ENCODE measurements at regions of chr2 and their contacts with region 1.

Region 1: DNA sequence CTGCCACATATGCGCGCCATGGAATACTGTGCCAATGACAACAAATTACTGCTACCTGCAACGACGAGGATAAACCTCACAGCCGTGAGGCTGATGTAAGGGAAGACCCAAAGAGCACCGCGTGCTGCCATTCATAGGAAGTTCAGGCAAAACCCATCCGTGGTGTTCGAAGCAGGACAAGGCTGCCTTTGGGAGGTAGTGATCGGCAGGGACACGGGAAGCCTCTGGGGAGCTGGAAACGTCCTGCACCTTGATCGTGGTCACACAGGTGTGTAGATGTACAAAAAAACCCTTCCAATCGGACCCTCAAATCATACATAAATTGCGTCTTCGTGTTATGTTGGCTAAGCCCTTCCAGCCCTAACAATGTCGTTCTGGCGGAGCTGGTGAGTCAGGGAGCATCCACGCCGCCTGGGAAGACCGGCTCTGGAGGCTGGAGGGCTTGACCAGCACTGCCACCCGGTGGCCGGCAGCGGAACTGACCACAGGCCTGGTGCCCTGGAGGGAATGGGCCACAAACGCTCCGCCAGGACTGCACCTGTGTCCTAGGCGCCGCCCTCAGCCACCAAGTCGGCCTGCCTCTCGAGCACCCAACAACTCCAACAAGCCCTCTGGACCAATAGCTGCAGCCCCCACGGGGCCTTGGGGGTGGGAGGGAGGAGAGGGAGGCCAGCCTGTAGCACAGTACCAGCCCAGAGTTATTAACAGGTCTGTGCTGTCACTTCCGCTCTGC is 4.1 kb upstream of the NEURL3 start:
- DNase-seq: peak; percentile 85
- H3K4me3 ChIP-seq: no peak overlapping the region
- H3K27ac ChIP-seq: no peak overlapping the region
- H3K4me1 ChIP-seq: peaks cover 4% of the 10 kb centered on the region
- H3K27me3 ChIP-seq: no peaks in the 10 kb centered on the region
- CTCF ChIP-seq: peak; percentile 93

Region 2: DNA sequence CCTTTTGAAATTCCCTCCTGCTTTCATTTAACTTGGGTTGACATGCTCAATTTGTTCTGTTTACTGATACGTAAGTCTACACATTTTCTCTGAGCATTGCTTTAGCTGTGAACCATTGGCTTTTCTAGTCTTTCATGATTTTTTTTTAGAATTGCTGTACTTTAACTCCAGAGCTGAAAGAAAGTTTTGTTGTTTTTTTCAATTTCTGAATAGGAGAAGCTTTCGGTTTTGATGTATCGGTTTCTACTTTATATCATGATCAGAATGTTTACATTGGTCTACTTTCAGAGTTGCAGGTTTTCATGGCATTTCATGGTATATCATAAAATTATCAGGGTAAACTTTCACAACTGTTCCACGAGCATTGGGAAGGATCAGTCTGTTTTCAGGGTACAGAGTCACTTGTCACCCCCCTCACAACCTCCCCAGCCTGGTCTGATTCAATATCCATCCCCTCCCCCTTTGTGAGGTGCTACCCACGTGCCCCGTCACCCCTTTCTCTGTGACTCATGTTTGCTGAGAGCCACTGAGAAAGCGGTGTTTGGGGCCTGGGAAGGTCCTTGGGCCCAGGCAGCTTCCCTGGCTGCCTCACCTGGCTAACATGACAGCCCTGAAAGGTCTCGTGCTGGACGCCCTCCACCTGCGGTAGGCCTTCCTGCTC is 378.0 kb before region 1 on chr2:
- CTCF ChIA-PET with region 1: no interaction called
- POLR2A ChIA-PET with region 1: no interaction called
- intact Hi-C with region 1: loop called (anchors 5 kb)
- DNase-seq: no peak
- H3K4me3 ChIP-seq: no peak overlapping the region
- H3K27ac ChIP-seq: no peak overlapping the region
- H3K4me1 ChIP-seq: no peaks in the 10 kb centered on the region
- H3K27me3 ChIP-seq: peaks cover 3% of the 10 kb centered on the region
- CTCF ChIP-seq: no peak

Region 3: DNA sequence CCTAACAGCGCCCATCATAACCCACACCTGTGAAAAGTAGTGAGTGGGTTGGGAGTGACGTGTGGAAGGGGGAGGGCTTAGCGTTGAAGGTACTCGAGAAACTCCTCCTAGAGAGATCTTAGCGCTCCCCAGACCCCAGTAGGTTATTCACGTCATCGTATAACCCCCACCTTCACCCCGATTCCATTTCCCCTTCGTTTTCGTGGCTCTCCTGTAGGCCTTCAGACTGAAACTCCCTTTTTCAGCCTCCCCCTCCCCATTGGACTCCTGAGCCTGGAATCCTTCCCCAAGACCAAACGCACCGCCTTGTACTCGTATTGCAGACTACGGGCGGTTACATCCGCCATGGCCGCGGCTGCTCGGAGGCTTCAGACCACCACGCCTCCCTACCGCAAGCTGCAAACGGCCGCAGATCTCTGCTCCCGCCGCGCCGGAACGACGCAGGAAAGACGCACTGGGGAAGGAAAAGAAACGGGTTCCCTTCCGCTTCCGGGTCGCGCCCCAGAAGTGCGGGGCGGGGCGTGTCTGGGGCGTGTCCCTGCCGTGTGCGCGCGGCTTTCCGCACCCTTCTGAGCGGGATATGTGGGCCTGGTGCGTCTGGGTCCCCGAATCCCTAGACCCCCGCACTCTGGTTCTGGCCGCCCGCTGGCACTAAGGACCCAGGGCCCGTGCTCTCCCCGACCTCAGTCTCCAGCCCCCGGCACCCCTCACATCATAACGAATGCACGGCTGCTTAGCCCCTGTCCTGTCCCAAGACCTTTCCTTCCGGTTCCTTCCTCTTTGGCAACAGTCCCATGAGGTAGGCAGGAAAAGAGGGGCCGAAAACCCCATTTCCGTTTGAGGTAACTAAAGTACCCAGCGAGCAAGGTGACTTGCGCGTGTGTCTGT is 203.9 kb before region 1 on chr2 and contains the start of gene SNRNP200:
- CTCF ChIA-PET with region 1: no interaction called
- POLR2A ChIA-PET with region 1: no interaction called
- intact Hi-C with region 1: loop called (anchors 2 kb)
- DNase-seq: peak; percentile 96
- H3K4me3 ChIP-seq: peak within 1 kb of the TSS; percentile 94
- H3K27ac ChIP-seq: peak within 1 kb of the TSS; percentile 90
- H3K4me1 ChIP-seq: peaks cover 15% of the 10 kb centered on the region
- H3K27me3 ChIP-seq: no peaks in the 10 kb centered on the region
- CTCF ChIP-seq: no peak
- total RNA-seq, gene SNRNP200: 202 and 208 TPM in 2 replicates

Region 4: GRCh38 chr2:96407041-96407918 is 102.0 kb before region 1 on chr2:
- CTCF ChIA-PET with region 1: interaction called, 21 read pairs
- POLR2A ChIA-PET with region 1: no interaction called
- intact Hi-C with region 1: loop called (anchors 1 kb)
- DNase-seq: peak; percentile 81
- H3K4me3 ChIP-seq: no peak overlapping the region
- H3K27ac ChIP-seq: no peak overlapping the region
- H3K4me1 ChIP-seq: no peaks in the 10 kb centered on the region
- H3K27me3 ChIP-seq: no peaks in the 10 kb centered on the region
- CTCF ChIP-seq: peak; percentile 88

Measured in A673 (cell line).